Activated CD4-positive, alpha-beta memory T cell treated with anti-CD3 and anti-CD28 coated beads, Interleukin-2, amount 10 ng/mL, durations not matched to agents 7 days and 5 days (primary cell): ENCODE measurements at regions of chr19 and their contacts with region 1.

Region 1: DNA sequence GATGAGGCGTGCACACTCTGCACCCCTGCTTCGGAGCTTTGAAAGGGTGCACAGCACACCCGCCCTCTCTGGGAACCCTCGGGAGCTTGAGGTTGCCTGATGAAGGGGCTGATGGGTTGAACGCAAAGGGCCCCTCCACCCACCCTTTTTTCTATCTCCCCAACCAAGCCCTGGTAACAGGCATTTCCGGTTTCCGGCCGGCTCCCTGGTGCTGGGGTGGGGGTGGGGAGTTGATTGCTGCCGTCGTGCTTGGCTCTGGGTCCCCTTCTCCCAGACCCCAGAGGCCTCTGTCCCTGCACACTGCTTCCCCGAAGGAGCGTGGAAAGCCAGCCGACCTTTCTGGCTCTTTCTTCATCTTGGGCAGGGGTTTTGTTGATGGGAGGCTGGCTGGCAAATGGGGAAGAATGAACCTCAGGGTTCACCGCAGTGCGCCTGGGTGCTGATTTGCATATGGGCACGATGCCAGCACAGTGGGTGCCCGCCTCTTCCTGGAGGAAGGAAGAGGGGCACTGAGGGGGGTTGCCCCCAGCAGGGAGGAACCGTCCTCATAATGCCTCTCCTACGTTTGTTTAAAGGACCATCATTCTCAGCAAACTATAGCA is 29.1 kb downstream of the VAV1 start:
- DNase-seq: peak; percentile 84
- H3K4me3 Mint-ChIP-seq: peak overlapping the region; percentile 74
- H3K27ac Mint-ChIP-seq: peak overlapping the region; percentile 94
- H3K4me1 Mint-ChIP-seq: peaks cover 66% of the 10 kb centered on the region
- H3K27me3 Mint-ChIP-seq: no peaks in the 10 kb centered on the region

Region 2: GRCh38 chr19:6626764-6627163 is 174.8 kb before region 1 on chr19:
- CTCF ChIA-PET with region 1: no interaction called
- POLR2A ChIA-PET with region 1: no interaction called
- DNase-seq: no peak
- H3K4me3 Mint-ChIP-seq: no peak overlapping the region
- H3K27ac Mint-ChIP-seq: no peak overlapping the region
- H3K4me1 Mint-ChIP-seq: peaks cover 11% of the 10 kb centered on the region
- H3K27me3 Mint-ChIP-seq: peaks cover 14% of the 10 kb centered on the region

Region 3: DNA sequence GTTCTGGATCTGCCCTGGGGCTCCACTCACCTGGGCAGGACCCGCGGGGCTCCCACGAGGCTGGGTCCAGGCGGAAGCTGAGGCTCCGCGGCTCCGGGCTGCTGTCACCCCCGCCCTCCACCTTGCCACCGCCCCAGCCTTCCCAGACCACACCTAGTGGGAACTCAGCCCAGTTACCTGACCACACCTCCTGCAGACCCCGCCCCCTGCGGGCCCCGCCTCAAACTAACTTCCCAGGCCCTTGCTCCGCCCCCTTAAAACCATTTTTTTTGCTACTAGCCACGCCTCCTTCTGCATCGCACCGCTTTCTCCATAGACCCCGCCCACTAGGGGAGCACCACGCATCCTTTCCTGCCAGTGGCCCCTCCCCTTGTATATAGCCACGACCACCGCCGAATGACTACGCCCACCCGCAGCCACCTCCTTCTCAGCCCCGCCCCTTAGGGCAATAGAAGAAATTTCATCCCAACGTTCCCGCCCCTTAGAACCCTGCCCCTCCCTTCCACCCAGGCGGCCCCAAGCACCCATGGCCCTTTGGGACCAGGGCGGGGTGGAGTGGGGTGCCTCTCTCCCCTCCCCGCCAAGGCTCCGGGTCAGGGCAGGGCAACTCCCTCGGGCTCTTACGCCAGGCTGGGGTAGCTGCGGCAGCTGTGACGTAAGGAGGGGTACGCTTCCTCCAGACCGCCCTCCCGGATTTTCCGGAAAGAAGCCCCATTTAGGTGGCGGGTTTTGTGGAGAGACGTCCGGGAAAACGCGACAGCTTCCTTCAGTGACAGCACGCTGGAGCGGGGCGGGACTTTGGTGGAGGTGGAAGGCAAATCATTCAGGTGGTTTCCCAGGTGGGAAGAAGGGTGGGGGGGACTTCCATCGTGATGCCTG is 34.0 kb before region 1 on chr19 and contains the start of gene SH2D3A:
- CTCF ChIA-PET with region 1: interaction called, 18 read pairs
- POLR2A ChIA-PET with region 1: interaction called, 77 read pairs
- DNase-seq: peak; percentile 96
- H3K4me3 Mint-ChIP-seq: peak within 1 kb of the TSS; percentile 88
- H3K27ac Mint-ChIP-seq: peak within 1 kb of the TSS; percentile 89
- H3K4me1 Mint-ChIP-seq: peaks cover 53% of the 10 kb centered on the region
- H3K27me3 Mint-ChIP-seq: no peaks in the 10 kb centered on the region
- total RNA-seq, gene SH2D3A: 26.4 to 28.1 TPM

Region 4: DNA sequence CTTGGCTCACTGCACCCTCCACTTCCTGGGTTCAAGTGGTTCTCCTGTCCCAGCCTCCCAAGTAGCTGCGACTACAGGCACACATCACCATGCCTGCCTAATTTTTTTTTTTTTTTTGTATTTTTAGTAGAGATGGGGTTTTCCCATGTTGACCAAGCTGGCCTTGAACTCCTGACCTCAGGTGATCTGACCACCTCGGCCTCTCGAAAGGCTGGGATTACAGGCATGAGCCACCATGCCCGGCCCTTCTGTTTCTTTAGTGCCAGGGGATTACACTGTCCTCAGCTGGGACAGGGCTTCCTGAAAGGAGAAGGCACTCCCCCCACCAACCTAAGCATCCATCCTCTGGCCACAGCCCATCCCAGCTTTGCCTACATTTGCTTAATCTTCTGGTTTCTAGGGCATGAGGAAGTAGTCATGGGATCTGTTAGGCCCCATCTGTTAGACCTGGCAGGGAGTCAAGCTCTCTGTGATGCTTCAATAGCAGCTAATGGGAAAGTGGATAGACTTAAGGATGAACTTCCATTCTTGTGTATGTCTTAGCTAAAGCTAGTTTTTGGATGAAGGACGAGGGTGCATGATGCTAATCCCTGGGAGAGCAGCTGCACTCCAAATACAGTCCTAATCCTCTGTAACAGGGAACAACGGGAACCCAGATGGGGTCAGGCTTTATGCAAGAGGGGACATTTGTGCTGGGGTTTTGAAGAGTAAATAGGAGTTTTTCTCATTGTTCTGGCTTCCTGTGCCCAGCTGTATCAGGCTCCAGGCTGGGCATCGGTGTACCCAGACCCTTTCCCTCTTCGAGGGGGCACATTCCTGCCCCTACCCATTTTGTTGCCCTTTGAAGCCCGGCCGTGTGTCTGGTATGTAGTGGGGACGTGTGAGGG is 26.5 kb before region 1 on chr19:
- CTCF ChIA-PET with region 1: interaction called, 18 read pairs
- POLR2A ChIA-PET with region 1: interaction called, 77 read pairs
- DNase-seq: no peak
- H3K4me3 Mint-ChIP-seq: peak overlapping the region; percentile 60
- H3K27ac Mint-ChIP-seq: peak overlapping the region; percentile 32
- H3K4me1 Mint-ChIP-seq: peaks cover 61% of the 10 kb centered on the region
- H3K27me3 Mint-ChIP-seq: no peaks in the 10 kb centered on the region

Region 5: DNA sequence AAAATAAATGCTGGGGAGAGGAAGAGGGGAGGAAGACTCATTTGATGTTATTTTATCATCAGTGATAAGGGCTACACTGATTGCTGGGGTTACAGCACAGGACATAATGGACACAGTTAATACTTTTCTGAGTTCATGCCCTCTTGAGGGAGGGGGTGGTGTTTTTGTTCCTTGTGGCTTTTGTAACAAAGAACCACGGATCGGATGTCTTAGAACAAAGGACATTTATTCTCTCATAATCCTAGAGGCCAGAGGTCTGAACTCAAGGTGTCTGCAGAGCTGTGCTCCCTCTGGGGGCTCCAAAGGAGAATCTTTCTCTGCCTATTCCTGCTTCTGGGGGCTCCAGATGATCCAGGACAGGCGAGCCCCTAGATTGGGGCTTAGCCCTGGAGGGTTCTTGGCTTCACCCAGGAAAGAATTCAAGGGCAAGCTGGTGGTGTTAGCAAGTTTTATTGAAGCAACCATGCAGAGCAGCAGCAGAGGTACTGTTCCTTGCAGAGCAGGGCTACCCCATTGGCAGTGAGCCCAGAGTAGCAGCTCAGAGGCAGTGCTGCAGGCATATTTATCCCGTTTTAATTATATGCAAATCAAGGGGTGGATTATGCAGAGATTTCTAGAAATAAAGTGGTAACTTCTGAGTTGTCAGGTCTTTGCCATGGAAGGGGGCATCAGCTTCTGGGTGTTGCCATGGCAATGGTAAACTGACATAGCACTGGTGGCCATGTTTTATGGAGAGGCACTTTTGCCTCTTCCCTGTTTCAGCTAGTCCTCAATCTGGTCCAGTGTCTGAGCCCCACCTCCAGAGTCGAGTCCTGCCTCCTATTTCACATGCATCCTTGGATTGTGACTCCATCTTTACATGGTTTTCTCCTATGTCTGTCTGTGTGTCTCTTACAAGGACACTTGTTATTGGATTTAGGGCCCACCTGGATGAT is 11.1 kb before region 1 on chr19:
- CTCF ChIA-PET with region 1: no interaction called
- POLR2A ChIA-PET with region 1: interaction called, 13 read pairs
- DNase-seq: no peak
- H3K4me3 Mint-ChIP-seq: no peak overlapping the region
- H3K27ac Mint-ChIP-seq: no peak overlapping the region
- H3K4me1 Mint-ChIP-seq: peaks cover 56% of the 10 kb centered on the region
- H3K27me3 Mint-ChIP-seq: no peaks in the 10 kb centered on the region

Region 6: DNA sequence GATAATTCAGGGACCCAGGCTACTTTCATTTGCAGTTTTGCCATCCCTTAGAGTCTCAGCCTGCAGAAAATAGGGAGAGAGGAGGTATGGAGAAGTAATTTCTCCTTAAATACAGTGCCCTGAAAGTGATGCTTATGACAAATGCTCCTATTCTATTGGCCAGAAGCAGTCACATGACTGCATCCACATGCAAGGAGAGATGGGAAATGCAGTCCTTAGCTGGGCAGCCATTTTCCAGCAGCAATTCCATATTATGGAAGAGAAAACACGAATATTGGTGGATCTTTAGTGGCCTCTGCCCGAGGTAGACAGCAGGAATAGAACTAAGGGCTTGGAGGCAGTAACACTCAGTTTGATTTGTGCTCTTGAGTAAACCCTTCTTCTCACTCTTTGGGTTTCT is 10.3 kb after region 1 on chr19:
- CTCF ChIA-PET with region 1: interaction called, 15 read pairs
- POLR2A ChIA-PET with region 1: interaction called, 66 read pairs
- DNase-seq: no peak
- H3K4me3 Mint-ChIP-seq: no peak overlapping the region
- H3K27ac Mint-ChIP-seq: no peak overlapping the region
- H3K4me1 Mint-ChIP-seq: peaks cover 63% of the 10 kb centered on the region
- H3K27me3 Mint-ChIP-seq: no peaks in the 10 kb centered on the region